ENCODE measurements at regions of chr9 and their contacts with region 1.

Region 1: GRCh38 chr9:73474625-73475024 is 323.0 kb downstream of the ANXA1 start:
- DNase-seq: no peak
- ATAC-seq: no peak
- H3K4me3 ChIP-seq: no peak overlapping the region
- H3K27ac ChIP-seq: no peak overlapping the region
- H3K4me1 ChIP-seq: no peaks in the 10 kb centered on the region
- H3K27me3 ChIP-seq: no peaks in the 10 kb centered on the region
- CTCF ChIP-seq: no peak
- POLR2A ChIP-seq: no peak

Region 2: DNA sequence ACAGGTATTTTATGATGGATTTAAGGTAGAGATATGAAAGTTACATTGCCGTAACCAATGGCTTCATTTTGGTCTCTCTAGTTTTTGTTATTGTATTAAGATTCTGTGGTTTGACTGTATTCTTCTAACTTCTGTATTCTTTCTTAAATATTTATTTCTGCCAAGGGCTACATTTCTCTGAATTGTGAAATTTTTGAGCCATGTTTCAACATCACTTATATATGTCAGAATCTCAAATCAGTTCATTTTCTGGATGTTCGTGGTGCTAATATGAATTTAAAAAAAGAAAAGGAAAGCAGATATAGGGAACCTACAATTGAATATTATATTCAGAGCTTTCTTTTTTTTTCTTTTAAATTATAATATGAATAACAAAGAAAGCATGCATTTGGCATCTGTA is 180.3 kb before region 1 on chr9:
- in situ Hi-C with region 1: no loop called
- intact Hi-C with region 1: no loop called
- DNase-seq: no peak
- ATAC-seq: no peak
- H3K4me3 ChIP-seq: no peak overlapping the region
- H3K27ac ChIP-seq: no peak overlapping the region
- H3K4me1 ChIP-seq: no peaks in the 10 kb centered on the region
- H3K27me3 ChIP-seq: no peaks in the 10 kb centered on the region
- CTCF ChIP-seq: no peak
- POLR2A ChIP-seq: no peak

Region 3: GRCh38 chr9:73515216-73515615 is 40.6 kb after region 1 on chr9:
- in situ Hi-C with region 1: no loop called
- intact Hi-C with region 1: no loop called
- DNase-seq: no peak
- ATAC-seq: no peak
- H3K4me3 ChIP-seq: no peak overlapping the region
- H3K27ac ChIP-seq: no peak overlapping the region
- H3K4me1 ChIP-seq: no peaks in the 10 kb centered on the region
- H3K27me3 ChIP-seq: no peaks in the 10 kb centered on the region
- CTCF ChIP-seq: no peak
- POLR2A ChIP-seq: no peak

Region 4: GRCh38 chr9:73577848-73578247 is 103.2 kb after region 1 on chr9:
- in situ Hi-C with region 1: loop called in 1 of 4 experiments (anchors 25 kb)
- intact Hi-C with region 1: no loop called
- DNase-seq: no peak
- ATAC-seq: no peak
- H3K4me3 ChIP-seq: no peak overlapping the region
- H3K27ac ChIP-seq: no peak overlapping the region
- H3K4me1 ChIP-seq: no peaks in the 10 kb centered on the region
- H3K27me3 ChIP-seq: no peaks in the 10 kb centered on the region
- CTCF ChIP-seq: no peak
- POLR2A ChIP-seq: no peak